Activated naive CD4-positive, alpha-beta T cell treated with anti-CD3 and anti-CD28 coated beads for 36 hours (primary cell): ENCODE measurements at regions of chr1 and their contacts with region 1.

Region 1: GRCh38 chr1:212987702-212988322 is 27.9 kb downstream of the ANGEL2 start:
- DNase-seq: no peak
- H3K4me3 Mint-ChIP-seq: no peak overlapping the region
- H3K27ac Mint-ChIP-seq: no peak overlapping the region
- H3K4me1 Mint-ChIP-seq: peaks cover 4% of the 10 kb centered on the region
- H3K27me3 Mint-ChIP-seq: no peaks in the 10 kb centered on the region

Region 2: DNA sequence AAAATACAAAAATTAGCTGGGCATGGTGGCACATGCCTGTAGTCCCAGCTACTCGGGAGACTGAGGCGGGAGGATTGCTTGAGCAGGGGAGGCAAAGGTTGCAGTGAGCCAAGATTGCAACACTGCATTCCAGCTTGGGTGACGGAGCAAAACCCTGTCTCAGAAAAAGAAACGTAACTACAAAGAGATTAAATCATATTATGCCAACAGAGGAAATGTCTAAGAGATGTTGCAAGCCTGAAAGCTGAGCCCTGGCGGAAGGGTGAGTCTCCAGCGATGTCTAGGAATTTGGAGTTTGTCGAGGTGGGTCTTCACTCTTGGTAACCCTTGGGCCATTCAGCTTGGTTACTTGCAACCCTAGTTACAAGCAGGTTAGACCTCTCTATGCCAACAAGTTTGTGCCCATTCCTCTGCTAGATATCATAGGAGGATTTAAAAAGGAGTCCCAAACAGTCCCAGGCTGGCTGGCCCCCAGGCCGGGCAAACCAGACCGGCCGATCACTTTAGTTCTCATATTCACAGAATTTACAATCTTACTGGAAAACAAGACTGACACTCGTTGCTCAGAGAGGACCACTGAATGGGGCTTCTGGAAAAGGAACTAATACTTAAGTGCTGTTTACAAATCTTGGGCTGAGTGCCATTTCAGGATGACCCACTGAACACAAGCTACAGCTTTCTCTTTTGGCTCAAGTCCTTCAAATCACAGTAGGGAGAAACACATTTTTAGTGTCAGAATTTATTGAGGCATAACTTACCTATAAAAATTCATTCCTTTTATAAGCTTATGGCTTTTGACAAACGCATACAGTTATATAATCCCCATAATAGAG is 1436.0 kb before region 1 on chr1:
- CTCF ChIA-PET with region 1: no interaction called
- intact Hi-C with region 1: no loop called
- DNase-seq: no peak
- H3K4me3 Mint-ChIP-seq: no peak overlapping the region
- H3K27ac Mint-ChIP-seq: no peak overlapping the region
- H3K4me1 Mint-ChIP-seq: no peaks in the 10 kb centered on the region
- H3K27me3 Mint-ChIP-seq: peaks cover 2% of the 10 kb centered on the region

Region 3: GRCh38 chr1:211680752-211681327 is 1307.0 kb before region 1 on chr1:
- CTCF ChIA-PET with region 1: no interaction called
- intact Hi-C with region 1: loop called (anchors 10 kb)
- DNase-seq: peak; percentile 80
- H3K4me3 Mint-ChIP-seq: no peak overlapping the region
- H3K27ac Mint-ChIP-seq: peak overlapping the region; percentile 24
- H3K4me1 Mint-ChIP-seq: peaks cover 7% of the 10 kb centered on the region
- H3K27me3 Mint-ChIP-seq: no peaks in the 10 kb centered on the region

Region 4: GRCh38 chr1:212950243-212951125 is 37.3 kb before region 1 on chr1 and contains the start of gene VASH2:
- CTCF ChIA-PET with region 1: no interaction called
- intact Hi-C with region 1: loop called (anchors 5 kb)
- DNase-seq: peak; percentile 80
- H3K4me3 Mint-ChIP-seq: peak within 1 kb of the TSS; percentile 77
- H3K27ac Mint-ChIP-seq: no peak within 1 kb of the TSS
- H3K4me1 Mint-ChIP-seq: peaks cover 8% of the 10 kb centered on the region
- H3K27me3 Mint-ChIP-seq: peaks cover 41% of the 10 kb centered on the region
- total RNA-seq, gene VASH2: 0.38 to 1.2 TPM